HAP-1 (cell line): ENCODE measurements at regions of chr13 and their contacts with region 1.

Region 1: GRCh38 chr13:50529154-50529882 is 314.2 kb downstream of the DLEU7 start:
- DNase-seq: peak; percentile 63 to 90
- H3K4me3 ChIP-seq: no peak overlapping the region
- H3K4me1 ChIP-seq: peaks cover 13% of the 10 kb centered on the region
- H3K27me3 ChIP-seq: no peaks in the 10 kb centered on the region

Region 2: DNA sequence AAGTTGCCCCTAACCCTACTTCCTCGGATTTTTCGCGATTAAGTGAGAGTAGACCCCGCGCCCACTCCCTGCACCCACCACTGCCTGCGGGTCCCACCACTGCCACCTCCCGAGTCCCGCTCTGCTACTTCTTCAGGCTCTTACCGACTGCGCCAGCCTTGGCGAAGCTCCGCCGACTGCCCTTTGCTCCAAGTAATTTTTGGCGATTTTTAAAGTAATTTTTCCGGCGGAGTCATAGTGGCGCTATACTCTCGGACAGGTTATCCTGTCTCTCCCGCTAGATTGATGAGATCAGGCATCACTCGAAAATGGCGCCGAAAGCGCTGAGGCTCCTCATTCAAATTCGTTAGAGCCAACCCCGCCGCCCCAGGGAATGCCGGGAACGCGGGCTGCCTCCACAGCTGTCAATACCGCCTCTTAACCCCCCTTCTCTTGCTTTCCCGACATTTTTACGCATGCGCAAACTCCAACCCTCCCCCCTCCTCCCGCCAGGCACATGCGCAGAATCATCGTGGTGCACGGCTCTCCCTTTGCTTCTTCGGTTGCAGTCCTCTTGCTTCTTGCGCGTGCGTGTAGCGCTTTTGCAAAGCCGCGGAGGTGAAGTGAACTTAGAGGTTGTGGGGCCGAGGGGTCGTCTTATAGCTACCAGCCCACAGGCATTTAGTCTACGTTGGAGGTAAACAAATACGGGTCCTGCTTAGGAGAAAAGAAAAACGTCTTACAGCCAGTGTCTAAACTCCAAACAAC is 447.5 kb before region 1 on chr13:
- in situ Hi-C with region 1: loop called (anchors 25 kb)
- DNase-seq: peak; percentile 97 to 98
- H3K4me3 ChIP-seq: peak overlapping the region; percentile 93
- H3K4me1 ChIP-seq: peaks cover 24% of the 10 kb centered on the region
- H3K27me3 ChIP-seq: no peaks in the 10 kb centered on the region

Region 3: DNA sequence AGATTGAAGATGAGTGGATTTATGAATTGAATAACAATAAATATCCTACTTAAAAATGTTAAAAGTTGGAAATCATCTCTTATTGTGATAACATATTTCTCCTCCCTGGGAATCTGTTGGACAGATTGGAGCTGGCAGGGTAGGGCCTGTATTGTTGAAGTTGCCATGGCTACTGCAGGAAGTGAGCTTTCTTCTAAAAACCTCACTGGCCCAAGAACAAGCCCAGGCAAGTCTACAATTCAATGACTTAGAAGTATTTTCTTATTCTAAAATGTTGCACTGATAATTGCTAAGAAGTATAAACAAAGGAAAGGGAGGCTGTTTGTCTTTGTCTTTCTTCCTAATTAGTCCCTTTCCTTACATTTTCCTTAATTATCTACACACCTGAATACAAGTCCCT is 202.1 kb after region 1 on chr13:
- in situ Hi-C with region 1: no loop called
- DNase-seq: peak; percentile 57 to 58
- H3K4me3 ChIP-seq: no peak overlapping the region
- H3K4me1 ChIP-seq: no peaks in the 10 kb centered on the region
- H3K27me3 ChIP-seq: no peaks in the 10 kb centered on the region